Activated naive CD4-positive, alpha-beta T cell treated with anti-CD3 and anti-CD28 coated beads, Interleukin-2, amount 10 ng/mL, durations not matched to agents 7 days and 5 days (primary cell): ENCODE measurements at regions of chr17 and their contacts with region 1.

Region 1: DNA sequence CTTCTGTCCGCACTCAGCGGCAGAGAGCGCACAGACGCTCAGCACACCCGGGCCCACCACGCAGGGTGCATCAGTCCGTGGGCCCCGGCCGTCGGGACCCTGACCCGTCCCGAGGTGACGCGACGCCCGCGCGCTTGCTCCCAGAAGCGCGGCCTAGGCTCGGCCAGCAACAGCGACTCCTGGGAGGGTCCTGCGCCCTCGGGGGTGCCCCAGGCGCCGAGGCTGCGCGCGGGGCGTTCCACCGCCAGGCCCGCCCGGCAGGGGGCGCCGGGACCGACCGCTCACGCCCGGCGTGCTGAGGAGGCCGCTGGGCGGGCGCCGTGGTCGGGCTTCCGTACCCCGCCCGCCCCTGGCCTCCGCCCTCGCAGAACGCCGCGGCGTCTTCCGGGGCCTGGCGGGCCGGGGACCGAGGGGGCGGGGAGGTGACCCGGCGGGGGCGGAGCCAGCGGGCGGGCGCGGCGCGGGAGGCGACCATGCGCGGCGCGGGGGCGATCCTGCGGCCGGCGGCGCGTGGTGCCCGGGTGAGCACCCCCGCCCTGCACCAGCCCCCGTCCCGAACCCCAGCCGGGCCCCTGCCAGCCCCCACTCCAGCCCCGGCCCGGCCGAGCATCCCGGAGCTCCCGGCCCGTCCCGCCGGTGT is at the start of gene CISD3:
- DNase-seq: peak; percentile 89
- H3K4me3 Mint-ChIP-seq: peak within 1 kb of the TSS; percentile 100
- H3K27ac Mint-ChIP-seq: peak within 1 kb of the TSS; percentile 94
- H3K4me1 Mint-ChIP-seq: peaks cover 82% of the 10 kb centered on the region
- H3K27me3 Mint-ChIP-seq: no peaks in the 10 kb centered on the region

Region 2: GRCh38 chr17:38711792-38712571 is 18.0 kb before region 1 on chr17:
- CTCF ChIA-PET with region 1: interaction called, 14 read pairs
- DNase-seq: no peak
- H3K4me3 Mint-ChIP-seq: no peak overlapping the region
- H3K27ac Mint-ChIP-seq: no peak overlapping the region
- H3K4me1 Mint-ChIP-seq: peaks cover 70% of the 10 kb centered on the region
- H3K27me3 Mint-ChIP-seq: no peaks in the 10 kb centered on the region